Right ventricle myocardium superior (tissue), 1 donor: ENCODE measurements at regions of chr15 and their contacts with region 1.

Region 1: DNA sequence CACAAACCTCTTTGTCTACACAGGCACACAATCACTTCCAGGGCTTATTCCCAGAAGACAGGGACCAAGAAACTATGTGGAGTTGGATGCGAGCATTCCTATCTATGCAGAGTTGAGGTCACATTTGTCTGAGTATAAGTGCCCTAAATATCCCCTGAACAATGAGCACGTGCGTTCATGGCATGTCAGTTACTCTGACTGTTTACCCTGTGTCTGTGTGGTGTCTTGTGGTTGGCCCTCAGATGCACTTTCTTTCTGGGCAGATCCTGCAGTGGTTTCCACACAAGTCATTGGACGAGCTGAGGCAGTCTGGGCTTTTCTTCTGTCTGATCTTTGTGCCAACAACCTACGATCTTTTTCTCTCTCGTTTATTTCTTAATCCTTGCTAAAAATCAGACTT is 134.5 kb downstream of the FBN1 start:
- DNase-seq: no peak
- ATAC-seq: peak; percentile 64

Region 2: DNA sequence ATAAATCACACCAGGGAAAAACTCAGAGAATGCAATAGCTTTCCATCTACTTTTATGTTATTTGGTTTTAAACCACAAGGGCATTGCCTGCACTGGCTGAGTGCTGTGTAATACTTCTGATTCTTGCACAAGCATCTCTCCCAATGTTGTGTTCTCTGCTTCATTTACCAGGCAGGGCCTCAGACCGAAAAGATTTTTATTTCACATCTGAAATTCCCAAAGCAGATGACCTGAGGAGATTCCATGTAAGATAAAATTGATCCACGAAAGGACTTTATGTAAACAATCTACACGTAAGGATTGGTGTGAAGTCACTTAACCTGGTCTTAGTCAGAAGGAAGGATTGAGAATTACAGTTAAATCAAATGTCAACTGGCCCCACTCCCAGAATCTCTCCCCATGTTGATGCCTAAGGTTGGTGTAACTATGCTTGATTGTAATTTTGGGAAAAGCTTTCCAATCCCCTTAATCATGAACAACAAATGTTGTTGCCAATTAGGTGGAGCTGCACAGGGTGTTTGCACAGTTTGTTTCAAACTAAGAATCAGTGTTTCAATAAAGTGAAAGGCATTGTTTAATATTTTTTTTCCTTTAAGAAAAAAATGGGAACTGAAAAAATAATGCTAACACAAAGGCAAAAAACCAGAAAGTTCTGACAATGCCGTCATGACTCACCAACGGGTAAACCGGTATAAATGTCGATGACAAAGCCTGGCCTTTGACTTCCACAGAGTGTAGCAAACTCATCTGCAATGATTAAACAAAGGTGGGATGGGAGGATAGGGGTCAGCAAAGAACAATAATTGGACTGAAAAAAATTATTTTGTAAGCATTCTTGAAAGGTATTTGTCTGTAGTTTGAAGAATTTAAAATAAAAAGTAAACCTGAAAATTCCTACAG is 51.2 kb before region 1 on chr15:
- intact Hi-C with region 1: loop called (anchors 10 kb)
- DNase-seq: no peak
- ATAC-seq: peak; percentile 46